SK-N-SH (cell line): ENCODE measurements at regions of chr11 and their contacts with region 1.

Region 1: GRCh38 chr11:133821776-133822175 is 23.5 kb downstream of the SPATA19 start:
- DNase-seq: peak; percentile 66
- H3K4me3 ChIP-seq: peak overlapping the region in 1 of 2 experiments; percentile 32; a peak in 1 of 4 replicates
- H3K27ac ChIP-seq: no peak overlapping the region
- H3K4me1 ChIP-seq: no peaks in the 10 kb centered on the region; a peak in 1 of 4 replicates
- H3K27me3 ChIP-seq: no peaks in the 10 kb centered on the region
- CTCF ChIP-seq: peak; percentile 25; the same call in 1 of the 2 replicates
- EP300 ChIP-seq: no peak
- RAD21 ChIP-seq: peak; percentile 69

Region 2: GRCh38 chr11:133809569-133810491 is 11.9 kb before region 1 on chr11:
- CTCF ChIA-PET with region 1: interaction called, 16 read pairs
- POLR2A ChIA-PET with region 1: no interaction called
- DNase-seq: no peak
- H3K4me3 ChIP-seq: no peak overlapping the region
- H3K27ac ChIP-seq: no peak overlapping the region
- H3K4me1 ChIP-seq: peaks cover 0 to under 1% of the 10 kb centered on the region in 2 experiments; a peak in 1 of 4 replicates
- H3K27me3 ChIP-seq: no peaks in the 10 kb centered on the region
- CTCF ChIP-seq: no peak
- EP300 ChIP-seq: no peak
- RAD21 ChIP-seq: no peak

Region 3: GRCh38 chr11:133834682-133835592 is 13.2 kb after region 1 on chr11:
- CTCF ChIA-PET with region 1: interaction called, 18 read pairs
- POLR2A ChIA-PET with region 1: no interaction called
- DNase-seq: peak; percentile 79
- H3K4me3 ChIP-seq: no peak overlapping the region; a peak in 1 of 4 replicates
- H3K27ac ChIP-seq: no peak overlapping the region
- H3K4me1 ChIP-seq: no peaks in the 10 kb centered on the region
- H3K27me3 ChIP-seq: no peaks in the 10 kb centered on the region
- CTCF ChIP-seq: peak; percentile 34; the same call in 1 of the 2 replicates
- EP300 ChIP-seq: no peak
- RAD21 ChIP-seq: peak; percentile 89